ENCODE measurements at regions of chr5 and their contacts with region 1.

Region 1: GRCh38 chr5:66518716-66519171 is 77.4 kb upstream of the MAST4 start:
- ATAC-seq: no peak
- H3K4me3 ChIP-seq: no peak overlapping the region
- H3K27ac ChIP-seq: no peak overlapping the region
- H3K4me1 ChIP-seq: no peaks in the 10 kb centered on the region

Region 2: DNA sequence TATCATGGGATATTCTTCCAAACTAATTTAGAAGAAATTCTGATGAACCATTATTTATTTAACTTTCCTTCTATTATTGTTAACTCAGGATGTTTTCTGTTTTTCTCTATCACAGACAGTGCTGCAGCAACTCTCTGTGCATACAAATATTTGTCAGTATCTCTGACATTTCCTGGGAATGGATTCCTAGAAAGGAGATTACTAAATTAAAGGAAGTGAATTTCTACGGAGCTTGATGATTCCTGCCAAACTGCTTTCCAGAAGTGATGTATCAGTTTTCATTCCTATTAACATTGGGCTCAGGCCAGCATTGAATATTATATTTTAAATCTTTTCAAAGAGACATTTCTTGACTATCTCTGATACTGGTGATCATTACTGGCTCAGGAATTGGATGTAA is 51.5 kb after region 1 on chr5:
- in situ Hi-C with region 1: loop called in 1 of 9 experiments (anchors 10 kb)
- ATAC-seq: peak in 2 of 8 experiments; percentile 22 to 76
- H3K4me3 ChIP-seq: no peak overlapping the region
- H3K27ac ChIP-seq: no peak overlapping the region
- H3K4me1 ChIP-seq: no peaks in the 10 kb centered on the region

Region 3: DNA sequence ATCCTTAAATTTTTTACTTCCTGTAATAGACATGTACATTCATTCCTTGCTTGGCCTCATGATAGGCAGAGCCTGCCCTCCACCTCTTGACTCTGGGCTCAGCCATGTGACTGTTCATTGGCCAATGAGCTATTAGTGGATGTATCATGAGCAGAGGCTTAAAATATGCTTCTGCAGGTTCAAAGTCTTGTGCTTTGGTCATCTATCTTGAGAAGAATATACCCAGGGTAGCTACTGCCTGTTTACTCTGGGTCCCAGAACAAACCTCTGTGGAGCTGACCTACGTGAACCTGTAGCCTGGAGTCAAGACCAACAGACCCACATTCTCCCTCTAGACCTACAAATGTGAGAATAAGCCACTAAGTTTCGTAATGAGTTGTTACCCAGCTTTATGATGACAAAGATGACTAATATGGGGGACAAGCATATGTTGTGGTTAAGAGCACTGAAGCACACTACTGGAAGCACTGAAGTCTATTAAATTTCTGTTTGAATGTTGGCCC is 321.8 kb after region 1 on chr5:
- in situ Hi-C with region 1: no loop called
- ATAC-seq: peak in 1 of 8 experiments; percentile 17
- H3K4me3 ChIP-seq: no peak overlapping the region
- H3K27ac ChIP-seq: no peak overlapping the region
- H3K4me1 ChIP-seq: peaks cover 14 to 26% of the 10 kb centered on the region in 2 donors

Region 4: DNA sequence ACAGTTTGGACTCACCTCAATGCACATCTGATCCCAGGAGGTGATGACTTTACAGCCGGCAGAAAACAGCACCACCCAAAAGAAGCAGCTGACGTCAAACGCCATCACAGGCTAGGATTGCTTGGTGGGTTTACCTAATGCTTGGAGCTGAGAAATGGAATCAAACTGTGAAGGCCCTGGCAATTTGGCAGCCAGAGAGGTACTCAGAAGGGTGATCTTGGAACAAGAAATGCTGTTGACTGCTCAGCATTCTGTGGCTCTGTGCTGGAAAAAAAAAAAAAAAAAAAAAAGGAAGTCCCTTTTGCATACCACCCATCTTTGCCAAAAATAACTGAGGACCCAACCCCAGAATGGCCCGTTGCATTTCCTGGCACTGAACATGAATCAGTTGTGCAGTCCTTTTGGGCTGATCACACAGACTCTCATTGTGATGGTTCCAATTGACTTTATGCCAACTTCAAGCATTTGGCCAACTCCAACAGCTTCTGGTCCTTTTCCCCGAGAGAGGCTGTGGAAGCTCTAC is 677.9 kb after region 1 on chr5 and contains the start of gene CD180:
- in situ Hi-C with region 1: no loop called
- ATAC-seq: peak in 3 of 8 experiments; percentile 12 to 70 (median 63)
- H3K4me3 ChIP-seq: no peak within 1 kb of the TSS
- H3K27ac ChIP-seq: no peak within 1 kb of the TSS
- H3K4me1 ChIP-seq: no peaks in the 10 kb centered on the region
- total RNA-seq, gene CD180: under 0.01 to 13.4 (median 0.24) TPM